Lower leg skin (tissue), 4 donors: ENCODE measurements at regions of chr4 and their contacts with region 1.

Region 1: GRCh38 chr4:152540293-152540674 is 4.4 kb upstream of the FBXW7 start:
- DNase-seq: no peak
- H3K4me3 ChIP-seq: no peak overlapping the region
- CTCF ChIP-seq: no peak
- POLR2A ChIP-seq: no peak

Region 2: GRCh38 chr4:153555730-153556433 is 1015.6 kb after region 1 on chr4:
- intact Hi-C with region 1: loop called (anchors 10 kb)
- DNase-seq: no peak
- H3K4me3 ChIP-seq: no peak overlapping the region
- CTCF ChIP-seq: no peak
- POLR2A ChIP-seq: no peak